Dorsolateral prefrontal cortex (tissue), 120 donors: ENCODE measurements at regions of chr4 and their contacts with region 1.

Region 1: GRCh38 chr4:10164877-10165283 is 48.3 kb upstream of the WDR1 start:
- DNase-seq: peak in 8 of 10 donors; percentile 21 to 65 (median 48)
- H3K4me3 ChIP-seq: no peak overlapping the region
- H3K27ac ChIP-seq: no peak overlapping the region
- H3K27me3 ChIP-seq: no peaks in the 10 kb centered on the region
- CTCF ChIP-seq: peak; percentile 55 to 82 (median 73)

Region 2: DNA sequence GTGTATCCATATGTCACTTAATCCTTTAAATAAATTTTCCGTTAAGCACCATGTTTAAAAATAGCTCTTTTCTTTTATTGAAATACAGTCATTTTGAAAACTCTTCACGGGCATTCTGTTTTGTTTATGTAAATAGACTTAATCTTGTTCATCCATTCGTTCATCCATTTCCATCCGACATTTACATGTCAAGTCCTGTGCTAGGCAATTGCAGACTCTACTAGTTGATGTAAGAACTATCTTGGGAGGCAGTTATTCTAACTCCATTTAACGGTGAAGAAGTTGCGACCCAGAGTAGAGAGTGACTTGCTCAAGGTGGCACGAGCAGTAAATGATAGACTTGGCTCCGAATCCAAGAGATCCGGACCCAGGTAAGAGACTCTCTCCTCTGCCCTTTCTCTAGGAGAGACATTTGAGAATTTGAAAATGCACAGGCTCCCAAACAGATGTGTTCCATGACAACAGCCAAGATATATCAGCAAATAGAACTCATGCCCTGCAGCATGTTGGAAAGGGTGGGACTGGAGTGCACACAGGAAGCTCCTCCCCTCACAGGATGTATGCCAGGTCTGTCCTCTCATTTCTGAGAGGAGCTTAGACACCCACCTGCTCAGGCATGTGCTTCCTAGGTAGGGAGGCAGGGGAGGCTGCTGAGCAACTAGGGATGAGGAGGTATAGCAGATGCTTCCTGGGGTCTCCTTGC is 318.9 kb before region 1 on chr4:
- intact Hi-C with region 1: no loop called
- DNase-seq: no peak
- H3K4me3 ChIP-seq: no peak overlapping the region
- H3K27ac ChIP-seq: no peak overlapping the region
- H3K27me3 ChIP-seq: no peaks in the 10 kb centered on the region
- CTCF ChIP-seq: no peak

Region 3: GRCh38 chr4:10225096-10225495 is 60.2 kb after region 1 on chr4:
- intact Hi-C with region 1: no loop called
- DNase-seq: no peak
- H3K4me3 ChIP-seq: no peak overlapping the region
- H3K27ac ChIP-seq: no peak overlapping the region
- H3K27me3 ChIP-seq: no peaks in the 10 kb centered on the region
- CTCF ChIP-seq: no peak

Region 4: DNA sequence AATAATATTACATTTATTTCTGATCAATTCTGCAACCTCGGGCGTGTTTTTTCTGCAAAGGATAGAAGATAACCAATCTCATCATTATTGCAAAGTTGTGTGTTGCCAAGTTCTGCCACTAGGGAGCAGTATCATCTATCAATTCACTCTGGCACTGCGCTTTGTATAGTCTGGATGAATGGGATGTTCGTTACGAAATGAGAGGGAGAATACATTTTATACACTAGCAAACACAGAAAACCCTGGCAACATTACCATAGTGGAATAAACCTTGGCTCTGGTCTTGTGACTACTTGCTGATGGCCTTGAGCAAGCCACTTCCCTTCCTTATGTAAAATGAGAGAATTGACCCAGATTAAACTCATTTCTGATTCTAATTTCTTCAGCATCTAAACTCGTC is 389.8 kb after region 1 on chr4:
- intact Hi-C with region 1: loop called in 1 of 2 experiments (anchors 5 kb)
- DNase-seq: peak in 4 of 10 donors; percentile 24 to 70 (median 59)
- H3K4me3 ChIP-seq: peak overlapping the region in 14 of 59 donors; percentile 9 to 39 (median 17)
- H3K27ac ChIP-seq: no peak overlapping the region
- H3K27me3 ChIP-seq: peaks cover 0 to 10% (median 0%) of the 10 kb centered on the region in 45 donors
- CTCF ChIP-seq: peak; percentile 72 to 94 (median 84)